Mammary epithelial cell (primary cell): ENCODE measurements at regions of chr7 and their contacts with region 1.

Region 1: GRCh38 chr7:31134246-31135188 is 82.4 kb downstream of the ADCYAP1R1 start:
- DNase-seq: peak; percentile 52
- H3K4me3 ChIP-seq: no peak overlapping the region
- H3K27ac ChIP-seq: no peak overlapping the region
- H3K4me1 ChIP-seq: no peaks in the 10 kb centered on the region
- H3K27me3 ChIP-seq: no peaks in the 10 kb centered on the region
- CTCF ChIP-seq: peak; percentile 68

Region 2: GRCh38 chr7:31122649-31123058 is 11.9 kb before region 1 on chr7:
- CTCF ChIA-PET with region 1: interaction called, 12 read pairs
- dilution Hi-C with region 1: no loop called
- in situ Hi-C with region 1: no loop called
- intact Hi-C with region 1: no loop called
- DNase-seq: peak; percentile 63
- H3K4me3 ChIP-seq: no peak overlapping the region
- H3K27ac ChIP-seq: no peak overlapping the region
- H3K4me1 ChIP-seq: no peaks in the 10 kb centered on the region
- H3K27me3 ChIP-seq: peaks cover 5% of the 10 kb centered on the region
- CTCF ChIP-seq: peak; percentile 89 to 91

Region 3: DNA sequence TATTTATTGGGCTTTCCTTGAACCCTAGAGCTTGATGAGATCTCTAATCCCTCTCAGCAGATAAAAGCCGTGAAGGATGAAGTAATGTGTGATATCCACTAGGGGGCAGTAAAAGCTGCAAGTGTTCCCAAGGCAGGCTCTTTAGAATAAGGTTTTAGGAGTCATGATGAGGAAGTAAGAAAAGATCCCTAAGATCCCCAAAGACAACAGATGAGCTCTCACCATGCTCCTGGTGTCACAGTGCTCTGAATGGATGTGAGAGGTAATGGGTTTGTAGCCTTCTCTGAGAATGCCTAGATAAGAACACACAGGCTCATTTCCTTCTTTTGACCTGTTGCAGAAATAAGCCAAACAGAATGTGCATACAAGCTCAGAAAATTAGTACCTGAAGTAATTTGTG is 308.9 kb after region 1 on chr7:
- CTCF ChIA-PET with region 1: no interaction called
- dilution Hi-C with region 1: no loop called
- in situ Hi-C with region 1: no loop called
- intact Hi-C with region 1: loop called (anchors 1 kb)
- DNase-seq: peak; percentile 46
- H3K4me3 ChIP-seq: no peak overlapping the region
- H3K27ac ChIP-seq: no peak overlapping the region
- H3K4me1 ChIP-seq: no peaks in the 10 kb centered on the region
- H3K27me3 ChIP-seq: no peaks in the 10 kb centered on the region
- CTCF ChIP-seq: peak; percentile 76 to 81

Region 4: DNA sequence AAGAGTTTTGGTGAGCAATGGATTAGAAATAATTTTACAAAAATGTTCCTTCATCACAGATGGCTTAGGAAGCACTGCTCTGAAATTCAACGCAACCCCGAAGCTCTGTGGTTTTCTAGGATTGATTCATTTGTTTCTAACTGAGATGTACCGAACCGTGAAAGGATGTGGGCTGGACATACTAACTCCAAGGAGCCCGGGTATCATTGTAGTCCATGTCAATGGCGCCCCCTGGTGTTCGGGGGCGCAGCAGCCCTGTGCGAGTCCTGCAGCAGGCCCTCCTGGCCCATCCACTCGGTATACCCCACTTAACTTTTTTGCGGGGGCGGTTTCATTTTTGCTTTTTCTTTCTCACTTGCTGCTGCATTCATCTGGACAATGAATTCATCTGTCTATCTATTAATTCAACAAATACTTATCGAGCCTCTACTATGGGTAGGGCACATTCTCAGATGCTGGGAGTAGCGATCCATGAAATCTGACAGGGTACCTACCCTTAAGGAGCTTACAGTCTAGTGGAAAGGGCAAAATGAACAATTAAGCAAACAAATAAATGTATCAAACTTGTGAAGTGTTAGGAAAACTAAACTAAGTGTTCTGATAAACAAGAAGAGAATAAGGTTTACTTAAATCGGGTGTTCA is 354.2 kb after region 1 on chr7:
- CTCF ChIA-PET with region 1: no interaction called
- dilution Hi-C with region 1: no loop called
- in situ Hi-C with region 1: no loop called
- intact Hi-C with region 1: loop called (anchors 1 kb)
- DNase-seq: peak; percentile 57
- H3K4me3 ChIP-seq: no peak overlapping the region
- H3K27ac ChIP-seq: no peak overlapping the region
- H3K4me1 ChIP-seq: peaks cover 21% of the 10 kb centered on the region
- H3K27me3 ChIP-seq: no peaks in the 10 kb centered on the region
- CTCF ChIP-seq: peak; percentile 70 to 80

Region 5: GRCh38 chr7:32357535-32358277 is 1223.2 kb after region 1 on chr7:
- CTCF ChIA-PET with region 1: no interaction called
- dilution Hi-C with region 1: loop called (anchors 10 kb)
- in situ Hi-C with region 1: no loop called
- intact Hi-C with region 1: no loop called
- DNase-seq: peak; percentile 22
- H3K4me3 ChIP-seq: no peak overlapping the region
- H3K27ac ChIP-seq: no peak overlapping the region
- H3K4me1 ChIP-seq: no peaks in the 10 kb centered on the region
- H3K27me3 ChIP-seq: peaks cover 3% of the 10 kb centered on the region
- CTCF ChIP-seq: peak; percentile 51 to 66